A549 (cell line): ENCODE measurements at regions of chr2 and their contacts with region 1.

Region 1: DNA sequence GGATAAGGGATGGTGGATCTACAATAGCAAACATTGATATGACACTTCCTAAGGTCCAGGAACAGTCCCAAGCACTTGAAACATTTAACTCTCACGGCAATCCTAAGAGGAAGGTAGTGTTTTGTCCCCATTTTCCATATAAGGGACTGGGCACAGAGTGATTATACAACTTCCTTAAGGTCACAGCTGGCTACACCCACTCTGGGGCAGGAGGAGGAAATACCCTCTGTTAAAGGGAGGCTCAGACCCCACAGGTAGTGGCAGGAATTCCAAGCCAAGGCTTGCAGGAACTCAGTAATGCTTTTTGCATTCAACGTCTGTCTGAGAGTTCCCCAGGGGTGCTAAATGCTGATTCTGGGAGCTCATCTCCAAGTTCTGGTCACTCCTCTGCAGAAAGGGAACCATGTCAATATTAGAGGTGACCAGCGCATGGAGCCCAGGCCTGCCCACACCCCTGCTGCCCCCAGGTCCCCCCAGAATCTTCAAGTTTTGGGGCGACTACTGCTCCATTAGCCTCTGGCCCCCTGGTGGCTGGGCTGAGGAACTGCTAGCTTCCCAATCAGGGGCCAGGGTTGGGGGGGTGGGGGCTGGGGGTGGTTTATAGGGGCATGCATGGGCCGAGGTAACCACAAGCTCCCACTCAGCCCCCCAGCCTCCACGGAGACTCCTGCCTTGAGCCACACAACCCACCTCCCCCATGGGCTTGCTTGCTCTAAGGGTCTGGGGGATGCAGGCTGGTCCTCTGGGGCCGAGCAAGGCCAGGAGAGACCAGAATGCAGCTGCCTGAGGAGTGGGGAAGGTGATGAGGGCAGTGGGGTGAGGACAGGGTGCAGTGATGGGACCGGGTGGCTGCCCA is 11.1 kb downstream of the OBSL1 start:
- DNase-seq: peak in 1 of 2 experiments; percentile 47
- ATAC-seq: peak; percentile 12 to 66; a peak in 4 of 6 replicates
- H3K4me3 ChIP-seq: no peak overlapping the region
- H3K27ac ChIP-seq: no peak overlapping the region
- H3K4me1 ChIP-seq: no peaks in the 10 kb centered on the region
- CTCF ChIP-seq: peak; percentile 63
- EP300 ChIP-seq: no peak
- POLR2A ChIP-seq: no peak
- RAD21 ChIP-seq: no peak

Region 2: DNA sequence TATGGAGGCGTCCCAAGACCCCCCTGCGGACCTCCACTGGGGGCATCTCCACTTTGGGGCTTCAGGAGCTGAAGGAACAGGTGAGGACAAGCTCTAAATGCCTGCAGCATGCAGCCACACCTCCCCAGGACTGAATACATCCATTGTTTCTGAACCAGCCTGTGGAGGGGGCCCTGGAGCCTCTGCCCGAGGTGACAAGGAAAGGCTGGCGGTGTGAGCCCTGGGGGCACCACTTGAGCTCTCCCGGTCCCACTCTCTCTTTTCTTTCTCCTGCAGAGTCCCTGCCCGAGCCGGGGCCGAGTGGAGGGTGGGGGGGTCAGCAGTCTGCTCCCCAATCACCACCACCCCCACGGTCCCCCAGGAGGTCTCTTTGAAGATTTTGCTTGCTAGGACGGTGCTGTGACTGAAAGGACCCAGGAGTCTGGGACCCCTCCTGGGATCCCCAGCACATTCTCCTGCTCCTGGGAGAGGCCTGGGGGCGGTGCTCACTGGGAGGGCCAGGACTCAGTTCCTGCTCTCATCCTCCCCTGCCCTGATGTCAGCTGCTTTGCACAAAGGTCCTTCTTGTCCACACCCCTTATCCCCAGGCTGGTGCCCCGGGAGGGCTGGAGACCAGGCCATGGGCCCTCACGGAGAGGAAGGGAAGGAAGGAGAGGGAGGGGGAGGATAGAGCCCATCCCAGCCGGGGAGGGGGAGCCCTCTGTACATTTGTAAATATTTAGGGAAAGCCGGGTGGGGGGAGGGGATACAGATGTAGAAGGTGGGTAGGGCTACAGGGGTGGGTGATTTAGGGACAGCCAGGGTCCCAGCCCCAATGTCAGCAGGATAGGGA is 22.4 kb before region 1 on chr2:
- CTCF ChIA-PET with region 1: interaction called, 77 read pairs
- POLR2A ChIA-PET with region 1: no interaction called
- DNase-seq: no peak
- ATAC-seq: no peak
- H3K4me3 ChIP-seq: no peak overlapping the region
- H3K27ac ChIP-seq: no peak overlapping the region
- H3K4me1 ChIP-seq: peaks cover 9% of the 10 kb centered on the region
- CTCF ChIP-seq: no peak
- EP300 ChIP-seq: no peak
- POLR2A ChIP-seq: no peak
- RAD21 ChIP-seq: no peak

Region 3: GRCh38 chr2:219571311-219572236 is 11.3 kb after region 1 on chr2 and contains the start of gene OBSL1:
- CTCF ChIA-PET with region 1: interaction called, 50 read pairs
- POLR2A ChIA-PET with region 1: interaction called, 9 read pairs
- DNase-seq: peak; percentile 52 to 71
- ATAC-seq: peak; percentile 55 to 80
- H3K4me3 ChIP-seq: peak within 1 kb of the TSS; percentile 92
- H3K27ac ChIP-seq: peak within 1 kb of the TSS; percentile 82 to 95
- H3K4me1 ChIP-seq: peaks cover 14% of the 10 kb centered on the region
- CTCF ChIP-seq: no peak
- EP300 ChIP-seq: no peak
- POLR2A ChIP-seq: peak; percentile 43
- RAD21 ChIP-seq: no peak
- polyA plus RNA-seq, gene OBSL1: 14.4 and 15.6 TPM in 2 replicates

Region 4: GRCh38 chr2:219578790-219579616 is 18.7 kb after region 1 on chr2:
- CTCF ChIA-PET with region 1: interaction called, 50 read pairs
- POLR2A ChIA-PET with region 1: no interaction called
- DNase-seq: no peak
- ATAC-seq: no peak
- H3K4me3 ChIP-seq: no peak overlapping the region
- H3K27ac ChIP-seq: no peak overlapping the region
- H3K4me1 ChIP-seq: no peaks in the 10 kb centered on the region
- CTCF ChIP-seq: no peak
- EP300 ChIP-seq: no peak
- POLR2A ChIP-seq: no peak
- RAD21 ChIP-seq: no peak

Region 5: GRCh38 chr2:219597552-219598307 is 37.5 kb after region 1 on chr2 and contains the start of gene STK11IP:
- CTCF ChIA-PET with region 1: interaction called, 14 read pairs
- POLR2A ChIA-PET with region 1: no interaction called
- DNase-seq: peak; percentile 98 to 99
- ATAC-seq: peak; percentile 96 to 97
- H3K4me3 ChIP-seq: peak within 1 kb of the TSS; percentile 71
- H3K27ac ChIP-seq: peak within 1 kb of the TSS; percentile 90 to 94
- H3K4me1 ChIP-seq: peaks cover 11% of the 10 kb centered on the region; the same call in 2 of the 3 replicates
- CTCF ChIP-seq: no peak
- EP300 ChIP-seq: no peak
- POLR2A ChIP-seq: peak; percentile 93
- RAD21 ChIP-seq: no peak
- polyA plus RNA-seq, gene STK11IP: 13.3 and 18.4 TPM in 2 replicates

Region 6: GRCh38 chr2:219642465-219643080 is 82.3 kb after region 1 on chr2:
- CTCF ChIA-PET with region 1: interaction called, 19 read pairs
- POLR2A ChIA-PET with region 1: no interaction called
- DNase-seq: peak; percentile 85 to 94
- ATAC-seq: peak; percentile 82 to 95
- H3K4me3 ChIP-seq: no peak overlapping the region
- H3K27ac ChIP-seq: no peak overlapping the region
- H3K4me1 ChIP-seq: peaks cover 10% of the 10 kb centered on the region; the same call in 2 of the 3 replicates
- CTCF ChIP-seq: peak; percentile 97
- EP300 ChIP-seq: no peak
- POLR2A ChIP-seq: no peak
- RAD21 ChIP-seq: peak; percentile 90